HEK293T (cell line): ENCODE measurements at regions of chr14 and their contacts with region 1.

Region 1: DNA sequence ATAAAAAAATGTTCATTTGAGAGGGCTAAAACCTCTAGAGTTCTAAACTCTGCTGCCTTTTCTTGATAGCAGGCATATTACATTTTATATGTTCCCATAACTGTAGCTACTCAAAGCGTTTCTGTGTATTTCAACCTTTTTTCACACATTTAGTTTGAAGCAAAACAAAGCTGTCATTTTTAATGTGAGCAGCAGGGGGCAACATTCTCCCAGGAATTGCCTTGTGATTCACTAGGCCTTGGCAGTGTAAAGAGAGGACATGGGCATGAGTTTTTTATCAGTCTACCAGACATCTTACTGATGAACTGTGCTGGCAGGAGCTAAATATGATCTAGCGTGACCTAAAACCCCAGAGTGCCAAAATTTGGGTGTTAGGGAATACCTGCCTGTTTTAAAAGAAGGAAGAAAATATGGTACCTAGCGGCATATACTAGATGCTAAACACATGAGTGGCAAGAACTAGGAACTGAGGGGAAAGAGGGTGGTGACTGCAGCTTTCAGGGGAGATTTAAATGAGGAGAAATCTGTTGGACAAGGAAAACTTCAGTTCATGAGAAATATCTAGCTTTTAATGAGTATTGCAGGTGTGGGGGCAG is 65.3 kb downstream of the IFT43 start:
- DNase-seq: peak; percentile 64

Region 2: GRCh38 chr14:76012354-76012753 is 38.5 kb before region 1 on chr14:
- CTCF ChIA-PET with region 1: no interaction called
- POLR2A ChIA-PET with region 1: no interaction called
- DNase-seq: no peak

Region 3: GRCh38 chr14:76073717-76074116 is 22.8 kb after region 1 on chr14:
- CTCF ChIA-PET with region 1: no interaction called
- POLR2A ChIA-PET with region 1: no interaction called
- DNase-seq: no peak

Region 4: DNA sequence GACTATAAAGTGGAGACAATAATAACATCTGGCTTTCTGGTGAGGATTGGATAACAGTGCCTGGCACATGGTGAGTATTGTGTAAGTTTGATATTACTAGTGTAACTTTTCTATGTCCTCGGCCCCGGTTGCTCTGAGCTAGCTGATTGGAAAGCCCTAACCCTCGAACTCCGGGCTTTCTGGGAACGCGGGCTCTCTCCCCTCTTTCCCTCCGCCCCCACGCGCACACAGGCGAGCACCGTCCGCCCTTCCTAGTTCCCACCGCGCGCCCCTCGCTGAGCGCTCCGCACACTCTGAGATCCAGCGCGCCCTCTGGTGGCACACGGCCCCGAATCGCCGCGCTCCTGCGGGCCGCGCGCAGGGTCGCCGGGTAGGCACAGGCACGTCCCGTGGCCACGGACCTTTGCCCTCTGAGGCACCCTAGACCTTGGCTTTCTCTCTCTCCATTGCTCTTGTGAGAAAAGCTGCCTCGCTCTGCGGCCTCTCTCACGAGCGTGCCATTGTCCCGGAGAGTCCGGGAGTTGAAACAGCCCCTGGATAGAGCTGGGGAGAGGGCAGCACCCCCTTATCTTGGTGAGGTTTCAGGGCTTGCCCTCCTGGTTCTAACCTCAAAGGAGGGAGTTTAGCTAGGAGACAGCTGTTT is 301.9 kb after region 1 on chr14:
- CTCF ChIA-PET with region 1: interaction called, 12 read pairs
- POLR2A ChIA-PET with region 1: no interaction called
- DNase-seq: peak; percentile 80

Region 5: GRCh38 chr14:76386915-76387782 is 336.3 kb after region 1 on chr14:
- CTCF ChIA-PET with region 1: interaction called, 18 read pairs
- POLR2A ChIA-PET with region 1: no interaction called
- DNase-seq: peak; percentile 85